ENCODE measurements at regions of chr22 and their contacts with region 1.

Region 1: DNA sequence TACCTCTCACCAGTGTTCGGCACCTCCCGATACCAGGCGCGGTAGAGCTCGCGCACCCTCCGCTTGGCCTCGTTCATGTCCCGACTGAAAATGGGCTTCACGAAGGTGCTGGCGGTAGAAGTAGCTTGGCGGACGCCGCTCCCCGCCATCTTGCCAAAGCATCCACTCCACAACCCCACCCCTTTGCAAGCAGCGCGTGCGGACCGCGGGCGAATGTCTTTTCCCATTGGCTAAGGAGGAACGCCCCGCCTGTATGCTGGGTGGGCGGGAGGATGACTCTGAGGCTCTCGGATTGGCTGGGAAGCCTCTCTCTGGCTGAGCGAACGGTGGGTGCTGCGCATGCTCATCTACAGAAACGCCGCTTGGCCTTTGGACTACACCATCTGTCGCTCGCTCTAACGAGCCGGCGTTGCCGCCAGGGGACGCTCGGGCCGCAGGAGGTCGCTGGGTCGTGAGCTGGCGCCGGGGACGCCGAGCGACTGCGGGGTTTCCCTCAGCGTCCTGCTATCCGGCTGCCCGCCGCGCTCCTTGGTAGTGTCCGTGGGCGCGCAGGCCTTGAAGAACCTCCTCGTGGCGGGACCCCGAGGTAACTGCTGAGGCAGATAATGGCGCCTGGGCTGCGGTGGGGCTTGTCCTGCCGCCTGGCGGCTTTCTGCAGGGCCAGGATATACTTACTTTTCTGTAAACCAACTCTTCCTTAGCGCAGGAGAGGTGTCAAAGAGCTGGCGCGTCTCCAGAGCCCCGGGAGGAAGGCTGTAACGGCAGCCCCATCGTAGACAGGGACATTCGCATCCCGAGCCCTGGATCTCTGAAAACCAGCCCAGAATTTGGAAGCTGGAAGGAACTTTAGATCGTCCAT is at the start of gene NDUFA6:
- DNase-seq: peak; percentile 97
- ATAC-seq: peak; percentile 98
- H3K4me3 Mint-ChIP-seq: peak within 1 kb of the TSS; percentile 97
- H3K27ac Mint-ChIP-seq: peak within 1 kb of the TSS; percentile 99
- H3K4me1 Mint-ChIP-seq: peaks cover 23% of the 10 kb centered on the region
- H3K27me3 Mint-ChIP-seq: no peaks in the 10 kb centered on the region
- total RNA-seq, gene NDUFA6: 69.0 to 73.5 TPM

Region 2: DNA sequence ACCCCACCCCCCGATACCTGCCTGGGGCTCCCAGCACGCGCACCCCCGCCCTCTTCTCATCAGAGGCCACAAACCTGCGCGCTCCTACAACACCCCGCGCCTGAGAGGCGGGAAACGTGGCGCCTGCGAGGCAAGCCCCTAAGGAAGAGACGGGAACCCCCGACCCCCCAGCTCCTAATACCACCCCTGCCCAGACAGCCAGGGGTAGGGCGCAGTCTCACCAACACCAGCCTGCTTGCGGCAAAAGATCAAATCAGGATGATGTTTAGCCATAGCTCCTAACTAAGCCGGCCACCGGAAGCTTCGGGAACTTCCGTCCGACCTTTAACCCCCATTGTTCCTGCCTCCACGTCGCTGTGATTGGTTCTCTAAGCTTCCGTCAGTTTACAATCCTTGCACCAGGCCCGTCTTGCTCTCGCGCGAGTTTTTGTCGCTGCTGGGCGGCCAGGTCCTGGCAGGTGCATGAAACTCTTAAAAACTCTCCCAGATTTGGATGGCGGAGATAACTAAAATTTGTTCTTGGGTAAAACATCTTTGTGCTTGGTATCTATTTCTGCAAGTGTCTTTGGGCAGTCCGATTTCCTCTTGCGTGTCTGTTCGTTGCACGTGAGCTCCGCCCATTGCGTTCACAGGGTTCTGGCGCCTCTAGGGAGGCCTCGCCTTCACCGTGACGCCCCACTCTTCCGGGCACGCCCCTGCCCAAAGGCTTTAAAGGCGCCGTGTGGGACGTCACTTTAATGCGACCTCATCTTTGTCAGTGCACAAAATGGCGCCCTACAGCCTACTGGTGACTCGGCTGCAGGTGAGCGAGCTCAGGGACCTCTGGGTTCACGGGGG is 622.2 kb before region 1 on chr22 and contains the starts of genes ACO2 and PHF5A:
- POLR2A ChIA-PET with region 1: no interaction called
- DNase-seq: peak; percentile 97
- ATAC-seq: peak; percentile 91
- H3K4me3 Mint-ChIP-seq: peak within 1 kb of the TSS; percentile 94
- H3K27ac Mint-ChIP-seq: peak within 1 kb of the TSS; percentile 100
- H3K4me1 Mint-ChIP-seq: peaks cover 39% of the 10 kb centered on the region
- H3K27me3 Mint-ChIP-seq: no peaks in the 10 kb centered on the region
- total RNA-seq, gene ACO2: 73.7 to 76.2 TPM
- total RNA-seq, gene PHF5A: 47.0 to 51.0 TPM

Region 3: DNA sequence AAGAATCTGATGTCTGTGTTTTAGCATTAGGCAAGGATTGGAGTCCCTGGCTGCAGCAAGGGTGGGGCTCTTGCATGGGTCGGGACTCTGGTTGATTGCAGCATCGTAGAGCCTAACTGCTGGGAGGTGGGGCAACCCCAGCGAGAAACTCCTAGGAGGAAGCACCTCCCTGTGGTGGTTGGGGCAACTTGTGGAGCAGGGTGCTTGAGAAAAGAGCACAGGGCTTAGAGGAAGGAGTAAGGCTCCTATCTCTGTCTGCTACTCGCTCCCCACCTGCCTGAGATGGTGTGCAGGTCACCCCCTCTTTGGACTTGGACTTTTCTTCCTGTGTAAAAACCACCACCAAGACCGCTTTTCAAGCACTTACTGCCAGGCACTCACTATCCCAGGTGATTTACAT is 242.4 kb before region 1 on chr22:
- POLR2A ChIA-PET with region 1: no interaction called
- DNase-seq: no peak
- ATAC-seq: no peak
- H3K4me3 Mint-ChIP-seq: no peak overlapping the region
- H3K27ac Mint-ChIP-seq: no peak overlapping the region
- H3K4me1 Mint-ChIP-seq: peaks cover 23% of the 10 kb centered on the region
- H3K27me3 Mint-ChIP-seq: no peaks in the 10 kb centered on the region

Region 4: GRCh38 chr22:42070517-42071422 is 20.1 kb before region 1 on chr22 and contains the start of gene NAGA:
- POLR2A ChIA-PET with region 1: interaction called, 18 read pairs
- DNase-seq: peak; percentile 88
- ATAC-seq: peak; percentile 98
- H3K4me3 Mint-ChIP-seq: peak within 1 kb of the TSS; percentile 91
- H3K27ac Mint-ChIP-seq: peak within 1 kb of the TSS; percentile 94
- H3K4me1 Mint-ChIP-seq: peaks cover 20% of the 10 kb centered on the region
- H3K27me3 Mint-ChIP-seq: no peaks in the 10 kb centered on the region
- total RNA-seq, gene NAGA: 15.9 to 18.4 TPM

Region 5: DNA sequence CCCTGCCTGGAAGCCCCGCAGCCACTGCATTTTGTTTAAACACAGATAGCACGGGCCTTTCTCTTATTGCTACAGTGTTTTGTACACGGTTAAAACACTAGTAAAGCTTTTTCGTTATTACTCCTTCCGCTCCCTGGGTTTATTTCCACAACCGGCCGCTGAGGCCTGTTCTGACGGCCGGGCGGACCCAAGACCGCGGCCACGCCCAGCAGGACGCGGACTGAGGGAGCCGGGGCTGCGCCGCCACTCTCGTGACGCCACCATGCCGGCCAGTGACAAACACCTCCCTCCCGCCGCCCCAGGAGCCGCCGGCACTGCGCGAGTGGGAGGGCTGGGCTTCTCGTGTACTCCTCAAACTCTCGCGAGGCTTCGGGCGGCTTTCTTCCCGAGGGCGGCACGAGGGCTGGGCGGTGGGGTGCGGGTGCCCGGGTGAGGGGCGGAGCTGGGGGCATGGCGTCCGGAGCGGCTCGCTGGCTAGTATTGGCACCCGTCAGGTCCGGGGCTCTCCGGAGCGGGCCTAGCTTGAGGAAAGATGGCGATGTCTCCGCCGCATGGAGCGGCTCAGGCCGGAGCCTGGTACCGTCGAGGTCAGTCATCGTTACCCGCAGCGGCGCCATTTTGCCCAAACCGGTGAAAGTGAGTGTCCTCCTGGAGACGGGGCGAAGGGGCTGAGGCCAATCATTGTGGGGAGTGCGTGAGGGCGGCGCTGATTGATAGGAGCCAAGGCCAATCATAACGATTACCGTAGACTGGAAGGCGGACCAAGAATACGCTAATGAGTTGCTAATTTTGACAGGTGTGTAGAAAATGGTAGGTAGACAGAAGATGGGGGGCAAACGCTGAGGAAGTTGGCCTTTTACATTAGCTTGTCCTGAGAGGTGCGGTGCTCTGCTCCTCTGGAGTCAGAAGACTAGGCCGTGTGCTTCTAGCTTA is 11.2 kb before region 1 on chr22 and contains the start of gene SMDT1:
- POLR2A ChIA-PET with region 1: interaction called, 96 read pairs
- DNase-seq: peak; percentile 97
- ATAC-seq: peak; percentile 93
- H3K4me3 Mint-ChIP-seq: peak within 1 kb of the TSS; percentile 97
- H3K27ac Mint-ChIP-seq: peak within 1 kb of the TSS; percentile 97
- H3K4me1 Mint-ChIP-seq: peaks cover 19% of the 10 kb centered on the region
- H3K27me3 Mint-ChIP-seq: no peaks in the 10 kb centered on the region
- total RNA-seq, gene SMDT1: 82.1 to 84.9 TPM

Region 6: GRCh38 chr22:42114721-42115120 is 23.9 kb after region 1 on chr22:
- POLR2A ChIA-PET with region 1: interaction called, 10 read pairs
- DNase-seq: no peak
- ATAC-seq: no peak
- H3K4me3 Mint-ChIP-seq: no peak overlapping the region
- H3K27ac Mint-ChIP-seq: no peak overlapping the region
- H3K4me1 Mint-ChIP-seq: peaks cover 12% of the 10 kb centered on the region
- H3K27me3 Mint-ChIP-seq: no peaks in the 10 kb centered on the region

Region 7: GRCh38 chr22:42134100-42135020 is 43.5 kb after region 1 on chr22:
- POLR2A ChIA-PET with region 1: no interaction called
- DNase-seq: no peak
- ATAC-seq: no peak
- H3K4me3 Mint-ChIP-seq: no peak overlapping the region
- H3K27ac Mint-ChIP-seq: no peak overlapping the region
- H3K4me1 Mint-ChIP-seq: no peaks in the 10 kb centered on the region
- H3K27me3 Mint-ChIP-seq: no peaks in the 10 kb centered on the region

Region 8: GRCh38 chr22:42194962-42195361 is 104.1 kb after region 1 on chr22:
- POLR2A ChIA-PET with region 1: no interaction called
- DNase-seq: no peak
- ATAC-seq: no peak
- H3K4me3 Mint-ChIP-seq: no peak overlapping the region
- H3K27ac Mint-ChIP-seq: no peak overlapping the region
- H3K4me1 Mint-ChIP-seq: peaks cover 25% of the 10 kb centered on the region
- H3K27me3 Mint-ChIP-seq: no peaks in the 10 kb centered on the region

Region 9: GRCh38 chr22:42444077-42444904 is 353.5 kb after region 1 on chr22:
- POLR2A ChIA-PET with region 1: interaction called, 19 read pairs
- DNase-seq: peak; percentile 82
- ATAC-seq: peak; percentile 81
- H3K4me3 Mint-ChIP-seq: peak overlapping the region; percentile 68
- H3K27ac Mint-ChIP-seq: peak overlapping the region; percentile 87
- H3K4me1 Mint-ChIP-seq: peaks cover 17% of the 10 kb centered on the region
- H3K27me3 Mint-ChIP-seq: peaks cover 2% of the 10 kb centered on the region

Measured in activated naive CD8-positive, alpha-beta T cell treated with anti-CD3 and anti-CD28 coated beads, Interleukin-2, amount 10 ng/mL, durations not matched to agents 7 days and 5 days (primary cell).